ENCODE measurements at regions of chr13 and their contacts with region 1.

Region 1: GRCh38 chr13:73984949-73985691 is 149.1 kb downstream of the KLF12 start:
- DNase-seq: peak; percentile 89
- H3K4me3 Mint-ChIP-seq: peak overlapping the region; percentile 63
- H3K27ac Mint-ChIP-seq: peak overlapping the region; percentile 90
- H3K4me1 Mint-ChIP-seq: peaks cover 46% of the 10 kb centered on the region
- H3K27me3 Mint-ChIP-seq: no peaks in the 10 kb centered on the region

Region 2: DNA sequence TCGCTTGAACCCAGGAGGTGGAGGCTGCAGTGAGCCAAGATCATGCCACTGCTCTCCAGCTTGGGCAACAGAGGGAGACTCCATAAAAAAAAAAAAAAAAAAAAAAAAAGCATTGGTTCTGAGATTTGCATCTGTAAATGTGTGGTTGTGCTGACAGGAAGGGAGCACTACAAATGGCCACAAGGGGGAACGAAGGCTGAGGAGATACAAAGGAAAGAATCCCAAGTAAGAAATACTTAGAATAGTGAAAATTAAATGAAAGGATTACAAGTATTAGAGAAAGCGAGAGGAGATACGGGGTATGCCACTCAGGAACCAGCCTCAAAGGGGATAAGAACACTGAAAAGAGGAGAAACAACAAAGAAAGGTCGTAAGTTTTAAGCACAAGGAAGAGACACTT is 135.8 kb before region 1 on chr13:
- CTCF ChIA-PET with region 1: interaction called, 3 read pairs
- POLR2A ChIA-PET with region 1: no interaction called
- intact Hi-C with region 1: loop called (anchors 5 kb)
- DNase-seq: peak; percentile 22
- H3K4me3 Mint-ChIP-seq: no peak overlapping the region
- H3K27ac Mint-ChIP-seq: no peak overlapping the region
- H3K4me1 Mint-ChIP-seq: peaks cover 35% of the 10 kb centered on the region
- H3K27me3 Mint-ChIP-seq: no peaks in the 10 kb centered on the region

Region 3: GRCh38 chr13:73938375-73939070 is 46.6 kb before region 1 on chr13:
- CTCF ChIA-PET with region 1: no interaction called
- POLR2A ChIA-PET with region 1: no interaction called
- intact Hi-C with region 1: loop called (anchors 1 kb)
- DNase-seq: no peak
- H3K4me3 Mint-ChIP-seq: no peak overlapping the region
- H3K27ac Mint-ChIP-seq: no peak overlapping the region
- H3K4me1 Mint-ChIP-seq: peaks cover 77% of the 10 kb centered on the region
- H3K27me3 Mint-ChIP-seq: no peaks in the 10 kb centered on the region

Region 4: GRCh38 chr13:74026753-74027152 is 41.6 kb after region 1 on chr13:
- CTCF ChIA-PET with region 1: no interaction called
- POLR2A ChIA-PET with region 1: no interaction called
- intact Hi-C with region 1: loop called (anchors 2 kb)
- DNase-seq: peak; percentile 79
- H3K4me3 Mint-ChIP-seq: peak overlapping the region; percentile 65
- H3K27ac Mint-ChIP-seq: peak overlapping the region; percentile 71
- H3K4me1 Mint-ChIP-seq: peaks cover 78% of the 10 kb centered on the region
- H3K27me3 Mint-ChIP-seq: no peaks in the 10 kb centered on the region